Sciatic nerve (tissue), 2 donors: ENCODE measurements at regions of chr14 and their contacts with region 1.

Region 1: DNA sequence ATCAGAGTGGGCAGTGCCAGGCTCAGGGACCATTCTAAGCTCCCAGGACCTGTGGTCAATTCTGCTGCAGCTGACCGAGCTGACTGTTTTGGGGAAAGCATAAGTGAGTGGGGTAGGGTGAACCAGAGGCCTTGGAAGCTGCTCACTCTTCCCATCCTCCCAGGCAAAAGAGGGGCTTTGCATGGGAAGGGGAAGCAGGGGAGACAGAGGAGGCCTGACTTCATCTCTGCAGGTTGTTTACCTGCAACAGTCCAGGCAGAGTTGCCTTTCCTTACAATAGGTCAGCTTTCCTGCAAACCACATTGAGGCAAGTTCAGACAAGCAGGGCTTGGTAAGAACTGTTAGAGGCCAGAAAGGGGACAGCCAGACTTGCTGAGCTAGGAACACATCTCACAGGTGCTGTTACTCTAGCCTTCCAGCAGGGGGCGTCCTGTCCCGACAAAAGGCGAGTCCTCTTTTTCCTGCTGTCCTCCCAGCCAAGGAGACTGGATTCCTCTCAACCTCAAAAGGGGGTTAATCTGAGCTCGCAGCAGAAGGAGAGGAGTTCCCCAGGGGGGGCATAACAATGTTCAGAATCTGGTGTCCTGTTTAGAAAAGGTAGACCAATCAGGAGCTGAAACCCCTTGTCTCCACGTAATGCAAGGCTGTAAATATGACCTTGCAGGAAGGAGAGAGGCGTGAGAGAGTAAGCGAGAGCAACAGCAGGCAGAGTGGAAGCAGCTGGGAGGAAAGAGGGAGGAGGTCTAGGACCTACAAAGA is 4.3 kb upstream of the DHRS2 start:
- DNase-seq: peak; percentile 86
- ATAC-seq: peak; percentile 94

Region 2: DNA sequence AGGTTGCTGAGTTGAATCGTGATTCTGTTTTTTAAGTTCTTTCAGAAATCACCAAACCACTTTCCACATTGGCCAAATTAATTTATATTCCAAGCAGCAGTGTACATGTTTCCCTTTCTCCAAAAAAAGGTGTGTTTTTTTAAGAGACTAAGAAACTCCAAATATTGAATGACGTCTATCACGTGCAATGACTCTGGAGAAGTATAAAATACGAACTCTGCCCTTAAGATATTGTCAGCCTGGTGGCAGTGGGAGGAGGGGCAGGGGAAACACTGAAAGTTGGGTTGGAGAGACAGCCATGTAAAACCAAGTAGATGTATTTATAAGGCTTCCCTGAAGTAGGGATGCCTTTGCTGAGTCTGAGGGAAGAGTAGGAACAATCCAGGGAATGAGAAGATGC is 271.6 kb after region 1 on chr14:
- intact Hi-C with region 1: loop called (anchors 10 kb)
- DNase-seq: no peak
- ATAC-seq: no peak